ENCODE measurements at regions of chr16 and their contacts with region 1.

Region 1: DNA sequence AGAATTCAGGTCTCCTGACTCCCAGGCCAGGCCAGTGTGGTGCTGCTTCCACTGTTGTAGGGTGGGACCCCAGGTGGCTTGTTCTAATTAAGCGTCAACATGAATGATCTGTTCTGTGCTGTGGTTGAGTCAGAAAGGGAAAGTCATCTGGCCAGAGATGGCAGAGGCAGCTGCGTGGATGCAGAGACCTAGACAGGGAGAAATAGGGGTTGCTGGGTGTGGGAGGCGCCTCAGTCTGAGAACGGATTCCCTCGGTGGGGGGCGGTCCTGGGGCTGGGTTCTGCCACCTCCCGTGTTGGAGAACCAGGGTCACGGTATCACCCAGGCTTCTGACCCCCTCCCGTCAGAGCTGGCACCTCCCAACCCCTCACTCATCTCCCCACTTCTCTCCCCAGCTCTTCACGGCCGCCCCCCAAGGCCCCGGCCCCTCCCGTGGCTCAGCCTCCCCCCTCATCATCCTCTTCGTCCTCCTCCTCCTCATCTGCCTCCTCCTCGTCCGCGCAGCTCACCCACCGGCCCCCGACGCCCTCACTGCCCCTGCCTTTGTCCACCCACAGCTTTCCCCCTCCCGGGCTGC is 5.7 kb downstream of the FBRS start:
- DNase-seq: peak in 2 of 9 experiments; percentile 11 to 16
- ATAC-seq: no peak
- H3K4me3 ChIP-seq: no peak overlapping the region
- H3K4me3 Mint-ChIP-seq: peak overlapping the region; percentile 18
- H3K27ac ChIP-seq: no peak overlapping the region
- H3K27ac Mint-ChIP-seq: peak overlapping the region; percentile 84
- H3K4me1 ChIP-seq: peaks cover 34% of the 10 kb centered on the region
- H3K4me1 Mint-ChIP-seq: peaks cover 36% of the 10 kb centered on the region
- H3K27me3 ChIP-seq: no peaks in the 10 kb centered on the region
- H3K27me3 Mint-ChIP-seq: no peaks in the 10 kb centered on the region
- CTCF ChIP-seq: no peak

Region 2: DNA sequence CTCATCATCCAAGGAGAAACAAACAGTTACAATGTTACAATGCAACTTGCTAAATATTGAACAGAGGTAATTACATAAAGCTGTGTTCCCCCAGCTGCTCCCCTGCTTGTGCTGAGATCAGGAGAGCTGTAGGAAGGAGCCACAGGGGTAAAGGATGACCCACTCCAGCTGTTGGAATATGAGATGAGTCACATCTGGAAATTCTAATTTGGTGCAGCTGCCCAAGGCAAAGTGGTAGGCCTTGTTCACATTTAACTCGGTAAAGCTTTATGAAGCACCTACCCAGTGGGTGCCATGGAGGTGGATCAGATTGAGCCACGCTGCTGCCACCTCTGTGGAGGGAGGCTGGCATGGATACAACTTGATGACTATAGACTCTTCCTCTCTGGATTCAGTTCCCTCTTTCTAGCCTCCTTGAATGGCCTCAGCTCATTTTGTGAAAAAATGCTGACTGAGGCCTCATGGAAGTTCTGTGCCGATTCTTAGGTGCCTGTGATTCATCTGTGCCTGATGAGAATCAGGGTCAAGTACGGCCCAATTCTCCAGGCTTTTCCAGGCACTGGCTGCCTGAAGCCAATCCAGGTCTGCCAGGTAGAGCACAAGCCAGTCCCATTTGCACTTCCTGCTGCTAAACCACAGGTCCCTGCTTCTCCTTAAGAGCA is 61.2 kb before region 1 on chr16:
- CTCF ChIA-PET with region 1: no interaction called
- POLR2A ChIA-PET with region 1: no interaction called
- intact Hi-C with region 1: no loop called
- DNase-seq: no peak
- ATAC-seq: no peak
- H3K4me3 ChIP-seq: no peak overlapping the region
- H3K4me3 Mint-ChIP-seq: no peak overlapping the region
- H3K27ac ChIP-seq: no peak overlapping the region
- H3K27ac Mint-ChIP-seq: peak overlapping the region; percentile 52
- H3K4me1 ChIP-seq: no peaks in the 10 kb centered on the region
- H3K4me1 Mint-ChIP-seq: peaks cover 4% of the 10 kb centered on the region
- H3K27me3 ChIP-seq: no peaks in the 10 kb centered on the region
- H3K27me3 Mint-ChIP-seq: no peaks in the 10 kb centered on the region
- CTCF ChIP-seq: no peak

Region 3: GRCh38 chr16:30692381-30693064 is 28.6 kb after region 1 on chr16:
- CTCF ChIA-PET with region 1: interaction called, 73 read pairs
- POLR2A ChIA-PET with region 1: interaction called, 43 read pairs
- intact Hi-C with region 1: loop called (anchors 1 kb)
- DNase-seq: no peak
- ATAC-seq: no peak
- H3K4me3 ChIP-seq: no peak overlapping the region
- H3K4me3 Mint-ChIP-seq: no peak overlapping the region
- H3K27ac ChIP-seq: no peak overlapping the region
- H3K27ac Mint-ChIP-seq: no peak overlapping the region
- H3K4me1 ChIP-seq: peaks cover 7% of the 10 kb centered on the region
- H3K4me1 Mint-ChIP-seq: peaks cover 15% of the 10 kb centered on the region
- H3K27me3 ChIP-seq: no peaks in the 10 kb centered on the region
- H3K27me3 Mint-ChIP-seq: no peaks in the 10 kb centered on the region
- CTCF ChIP-seq: no peak

Measured in CD8-positive, alpha-beta T cell (primary cell).